Breast epithelium (tissue), 4 donors: ENCODE measurements at regions of chr6 and their contacts with region 1.

Region 1: DNA sequence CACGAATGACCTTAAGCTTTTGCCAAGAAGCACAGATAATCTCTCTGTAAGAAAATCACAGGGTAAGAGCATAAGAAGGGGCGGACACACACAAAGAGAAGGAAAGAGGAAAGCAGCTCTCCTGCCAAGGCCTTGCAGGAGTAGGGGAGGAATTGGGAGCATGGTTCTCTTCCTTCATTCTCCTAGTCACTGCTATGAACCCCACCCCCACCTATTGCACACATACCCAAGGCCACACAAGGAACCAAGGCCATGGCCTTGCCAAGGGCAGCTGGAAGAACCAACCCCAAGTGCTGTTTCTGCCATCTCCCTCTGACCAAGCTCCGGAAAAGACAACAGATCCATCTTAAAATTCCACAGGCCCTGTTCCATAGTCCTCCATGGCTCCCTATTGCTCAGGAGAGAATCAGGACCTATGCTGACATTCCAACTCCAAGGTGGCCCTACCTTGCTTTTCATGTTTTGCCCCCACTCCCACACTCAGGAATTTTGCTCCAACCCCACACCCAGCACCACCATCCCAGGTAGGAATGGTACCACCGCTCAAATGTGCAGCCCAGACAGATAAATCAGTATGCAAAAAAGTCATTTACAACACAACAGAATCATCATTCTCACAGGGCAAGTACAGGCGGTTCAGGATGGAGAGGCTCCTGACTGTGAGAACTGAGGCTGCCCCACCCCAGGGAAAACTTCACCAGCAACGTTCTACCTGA is 31.3 kb downstream of the TRAM2 start:
- DNase-seq: no peak
- H3K4me3 ChIP-seq: no peak overlapping the region
- H3K27ac ChIP-seq: peak overlapping the region; percentile 74 to 83
- H3K4me1 ChIP-seq: peaks cover 5% of the 10 kb centered on the region in 2 donors
- H3K27me3 ChIP-seq: no peaks in the 10 kb centered on the region
- CTCF ChIP-seq: no peak
- POLR2A ChIP-seq: no peak

Region 2: DNA sequence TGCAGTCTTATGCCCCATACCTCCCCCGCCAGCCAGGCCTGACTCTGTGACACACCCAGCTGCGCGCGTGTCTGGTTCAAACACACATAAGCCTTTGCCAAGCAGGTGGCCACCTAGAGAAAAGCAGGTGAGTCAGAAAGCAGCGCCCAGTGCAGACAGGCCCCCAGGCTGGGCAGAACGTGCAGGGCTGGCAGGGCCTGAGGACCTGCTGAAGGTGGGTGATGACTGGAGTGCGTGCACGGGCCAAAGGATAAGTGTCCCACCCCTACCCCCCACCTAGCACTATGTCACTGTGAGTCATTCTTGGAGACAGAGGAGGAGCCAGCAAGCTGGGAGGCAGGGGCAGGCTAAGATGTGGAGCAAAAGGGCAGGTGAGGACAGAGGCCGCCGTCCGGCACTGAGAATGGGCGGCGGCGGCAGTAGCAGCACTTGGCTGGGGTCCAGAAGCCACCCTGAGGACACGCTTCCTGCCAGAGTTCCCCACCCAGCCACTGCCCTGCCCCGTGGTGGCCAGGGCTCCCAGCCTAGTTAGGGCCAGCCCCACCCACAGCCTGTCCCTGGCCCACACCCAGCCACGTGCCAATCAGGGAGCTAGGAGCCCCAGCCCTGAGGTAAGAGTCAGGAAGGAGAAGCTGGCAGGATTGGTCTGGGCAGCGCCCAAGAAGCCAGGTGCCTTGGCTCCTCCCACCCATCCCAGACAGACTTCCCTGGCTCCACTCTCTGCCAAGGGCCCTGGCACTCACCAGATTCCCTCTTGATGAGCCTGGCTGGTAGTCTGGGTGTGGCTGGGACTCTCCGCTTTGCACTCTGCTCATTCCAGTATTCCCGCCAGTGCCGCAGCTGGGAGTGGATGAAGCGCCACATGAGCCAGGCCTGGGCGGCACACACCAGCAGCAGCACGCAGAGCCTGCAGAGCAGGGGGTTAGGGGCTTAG is 41.4 kb before region 1 on chr6:
- intact Hi-C with region 1: no loop called
- DNase-seq: peak; percentile 92 to 97
- H3K4me3 ChIP-seq: peak overlapping the region in 2 of 3 donors; percentile 27 to 47
- H3K27ac ChIP-seq: peak overlapping the region; percentile 83 to 86
- H3K4me1 ChIP-seq: peaks cover 3 to 13% of the 10 kb centered on the region in 2 donors
- H3K27me3 ChIP-seq: no peaks in the 10 kb centered on the region
- CTCF ChIP-seq: no peak
- POLR2A ChIP-seq: no peak

Region 3: DNA sequence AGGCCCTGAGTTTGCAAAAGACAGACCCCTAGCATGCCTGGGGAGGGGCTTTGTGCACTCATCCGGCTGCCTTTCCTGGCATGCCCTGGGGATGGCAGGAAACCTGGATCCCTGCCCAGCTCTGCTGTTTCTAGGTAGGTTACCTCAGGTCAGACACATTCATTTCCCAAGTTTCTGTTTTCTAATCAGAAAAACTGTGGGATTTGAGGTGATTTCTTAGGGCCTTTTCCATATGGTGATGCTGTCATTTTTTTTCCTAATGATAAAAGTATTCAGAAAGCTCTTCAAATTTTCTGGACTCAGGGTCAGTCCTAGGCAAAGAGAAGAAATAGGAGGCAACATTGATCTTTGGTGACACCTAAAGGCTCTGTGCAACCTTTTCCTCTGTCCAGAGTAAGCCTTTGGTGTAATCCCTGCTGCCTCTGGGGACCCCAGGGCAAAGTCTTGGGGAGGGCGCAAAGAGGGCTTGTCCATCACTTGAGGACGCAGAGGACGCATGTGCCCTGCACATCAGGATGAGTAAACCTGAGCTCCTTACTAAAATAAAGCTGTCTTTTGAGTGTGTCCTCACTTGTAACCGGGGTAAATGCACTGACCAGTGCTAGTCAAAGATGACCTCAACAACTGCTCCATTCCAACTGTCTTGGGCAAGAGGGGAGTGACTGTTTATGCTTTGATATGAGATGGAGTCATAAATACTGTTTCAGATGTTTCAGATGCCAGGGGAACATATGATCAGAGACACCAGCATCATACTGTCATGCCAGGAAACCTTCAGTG is 44.8 kb after region 1 on chr6:
- intact Hi-C with region 1: loop called (anchors 1 kb)
- DNase-seq: no peak
- H3K4me3 ChIP-seq: no peak overlapping the region
- H3K27ac ChIP-seq: no peak overlapping the region
- H3K4me1 ChIP-seq: no peaks in the 10 kb centered on the region
- H3K27me3 ChIP-seq: no peaks in the 10 kb centered on the region
- CTCF ChIP-seq: no peak
- POLR2A ChIP-seq: no peak

Region 4: DNA sequence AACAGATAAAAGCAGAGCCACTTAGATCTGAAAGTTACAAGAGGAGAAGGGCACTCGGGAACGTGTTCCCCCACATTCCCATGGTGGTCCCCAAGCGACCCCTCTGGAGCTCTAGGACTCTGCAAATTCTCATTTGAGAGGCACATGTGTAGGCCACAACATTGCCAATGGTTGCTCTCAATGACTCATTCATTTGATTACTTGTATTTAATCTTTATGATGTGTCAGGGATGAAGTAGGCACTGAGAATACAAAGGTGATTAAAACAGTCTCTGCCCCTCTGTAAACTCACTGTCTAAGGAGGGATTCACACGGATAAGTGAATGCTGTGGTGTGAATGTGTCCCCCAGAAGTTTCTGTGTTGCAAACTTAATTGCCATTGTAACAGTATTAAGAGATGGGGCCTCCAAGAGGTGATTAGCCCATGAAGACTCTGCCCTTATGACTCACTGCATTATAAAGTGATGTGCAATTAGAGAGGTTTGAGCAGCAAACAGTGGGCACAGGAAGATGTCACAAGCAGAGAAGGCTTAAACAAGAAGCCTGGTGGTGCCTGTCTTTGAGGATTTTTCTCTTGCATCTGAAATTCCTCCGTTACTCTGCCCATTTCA is 65.3 kb after region 1 on chr6:
- intact Hi-C with region 1: no loop called
- DNase-seq: no peak
- H3K4me3 ChIP-seq: no peak overlapping the region
- H3K27ac ChIP-seq: no peak overlapping the region
- H3K4me1 ChIP-seq: no peaks in the 10 kb centered on the region
- H3K27me3 ChIP-seq: no peaks in the 10 kb centered on the region
- CTCF ChIP-seq: no peak
- POLR2A ChIP-seq: no peak